Naive thymus-derived CD4-positive, alpha-beta T cell (primary cell): ENCODE measurements at regions of chr6 and their contacts with region 1.

Region 1: DNA sequence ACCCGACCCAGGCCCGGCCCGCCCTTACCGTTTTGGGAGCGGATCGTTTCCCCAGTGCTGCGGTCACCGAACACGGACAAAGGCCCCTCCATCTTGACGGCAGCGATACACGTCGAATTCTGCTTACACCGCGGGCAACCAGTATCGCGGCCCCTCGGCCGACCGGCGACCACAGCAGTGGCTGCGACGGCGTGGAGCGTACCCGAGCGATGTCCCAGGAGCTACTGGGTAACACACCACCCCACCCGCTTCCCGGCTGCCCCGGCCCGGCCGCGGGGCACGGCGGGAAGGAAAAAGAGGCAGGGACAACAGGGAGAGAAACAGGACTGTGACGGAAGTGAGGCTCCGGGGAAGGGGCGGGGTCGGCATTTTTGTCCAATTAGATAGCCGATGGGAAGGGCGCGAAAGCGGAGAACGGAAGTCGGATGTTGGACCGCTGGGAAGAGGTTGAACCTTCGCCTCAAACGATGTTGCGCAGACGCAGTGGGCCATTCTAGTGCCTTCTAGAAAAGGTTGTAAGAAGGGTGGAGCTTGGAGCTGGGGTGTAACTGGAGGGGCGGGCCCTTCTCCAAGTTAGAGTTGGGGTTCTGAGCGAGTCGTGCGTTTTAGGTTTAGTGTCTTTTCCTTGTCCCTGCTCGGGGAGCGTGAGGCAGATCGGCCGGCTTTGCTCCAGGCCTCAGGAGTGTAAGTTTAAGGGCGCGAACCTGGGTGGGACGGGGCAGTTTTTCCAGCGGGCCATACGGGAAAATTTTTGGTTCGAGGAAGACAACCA is at the start of gene TCP1:
- DNase-seq: peak; percentile 87 to 99 (median 98)
- ATAC-seq: peak; percentile 89
- H3K4me3 ChIP-seq: peak within 1 kb of the TSS; percentile 98
- H3K4me3 Mint-ChIP-seq: peak within 1 kb of the TSS; percentile 94 to 100 (median 99)
- H3K27ac ChIP-seq: peak within 1 kb of the TSS; percentile 94
- H3K27ac Mint-ChIP-seq: peak within 1 kb of the TSS; percentile 95 to 99 (median 98)
- H3K4me1 ChIP-seq: peaks cover 15 to 27% of the 10 kb centered on the region in 2 donors
- H3K4me1 Mint-ChIP-seq: peaks cover 41 to 83% (median 69%) of the 10 kb centered on the region in 7 donors
- H3K27me3 ChIP-seq: no peaks in the 10 kb centered on the region
- H3K27me3 Mint-ChIP-seq: peaks cover 0 to 3% (median 0%) of the 10 kb centered on the region in 5 donors
- total RNA-seq, gene TCP1: 147 to 225 (median 154) TPM

Region 2: GRCh38 chr6:159633196-159633595 is 156.4 kb before region 1 on chr6:
- CTCF ChIA-PET with region 1: no interaction called
- POLR2A ChIA-PET with region 1: no interaction called
- intact Hi-C with region 1: no loop called
- DNase-seq: no peak
- ATAC-seq: no peak
- H3K4me3 ChIP-seq: no peak overlapping the region
- H3K4me3 Mint-ChIP-seq: no peak overlapping the region
- H3K27ac ChIP-seq: no peak overlapping the region
- H3K27ac Mint-ChIP-seq: no peak overlapping the region
- H3K4me1 ChIP-seq: no peaks in the 10 kb centered on the region
- H3K4me1 Mint-ChIP-seq: no peaks in the 10 kb centered on the region
- H3K27me3 ChIP-seq: no peaks in the 10 kb centered on the region
- H3K27me3 Mint-ChIP-seq: no peaks in the 10 kb centered on the region

Region 3: DNA sequence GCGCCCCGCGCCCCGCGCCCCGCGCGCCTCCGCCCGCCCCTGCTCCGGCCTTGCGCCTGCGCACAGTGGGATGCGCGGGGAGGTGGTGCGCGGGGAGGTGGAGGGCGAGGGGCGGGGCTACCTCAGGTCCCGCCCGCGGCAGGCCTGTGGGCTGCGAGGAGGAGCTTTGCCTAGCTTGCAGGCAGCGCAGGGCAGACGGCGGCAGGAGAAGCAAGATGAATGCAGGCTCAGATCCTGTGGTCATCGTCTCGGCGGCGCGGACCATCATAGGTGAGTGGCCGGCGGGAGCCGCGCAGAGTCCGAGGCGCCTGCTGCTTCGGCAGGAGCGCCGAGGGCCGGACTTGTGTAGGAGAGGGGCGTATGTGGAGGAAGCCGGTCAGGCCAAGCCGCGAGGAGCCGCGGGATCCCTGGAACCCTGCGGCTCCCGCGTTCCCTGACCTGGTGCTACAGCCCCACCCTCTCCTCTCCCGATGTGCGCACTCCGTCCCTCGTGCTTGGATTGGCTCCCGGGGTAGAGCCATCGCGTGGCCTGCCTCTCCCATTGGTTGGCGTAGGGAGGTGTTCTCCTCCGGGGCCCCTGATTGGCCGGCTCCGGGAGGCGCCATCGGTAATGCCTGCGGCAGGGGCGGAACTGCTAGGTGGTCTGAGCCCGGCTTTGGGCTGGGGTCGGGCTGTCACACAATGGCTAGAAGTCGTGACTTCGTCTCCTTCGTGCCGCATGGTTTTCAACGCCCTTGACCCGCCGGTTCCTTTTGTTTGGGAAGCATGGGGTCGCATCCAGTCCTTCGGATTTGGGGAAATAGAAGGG is 27.5 kb before region 1 on chr6 and contains the start of gene ACAT2:
- CTCF ChIA-PET with region 1: interaction called, 6 read pairs
- POLR2A ChIA-PET with region 1: interaction called, 101 read pairs
- intact Hi-C with region 1: loop called (anchors 1 kb)
- DNase-seq: peak; percentile 89 to 95 (median 93)
- ATAC-seq: peak; percentile 94
- H3K4me3 ChIP-seq: peak within 1 kb of the TSS; percentile 99
- H3K4me3 Mint-ChIP-seq: peak within 1 kb of the TSS; percentile 84 to 97 (median 94)
- H3K27ac ChIP-seq: peak within 1 kb of the TSS; percentile 98
- H3K27ac Mint-ChIP-seq: peak within 1 kb of the TSS; percentile 93 to 99 (median 97)
- H3K4me1 ChIP-seq: peaks cover 6 to 15% of the 10 kb centered on the region in 2 donors
- H3K4me1 Mint-ChIP-seq: peaks cover 23 to 49% (median 34%) of the 10 kb centered on the region in 7 donors
- H3K27me3 ChIP-seq: no peaks in the 10 kb centered on the region
- H3K27me3 Mint-ChIP-seq: no peaks in the 10 kb centered on the region
- total RNA-seq, gene ACAT2: 18.5 to 53.9 (median 28.0) TPM

Region 4: DNA sequence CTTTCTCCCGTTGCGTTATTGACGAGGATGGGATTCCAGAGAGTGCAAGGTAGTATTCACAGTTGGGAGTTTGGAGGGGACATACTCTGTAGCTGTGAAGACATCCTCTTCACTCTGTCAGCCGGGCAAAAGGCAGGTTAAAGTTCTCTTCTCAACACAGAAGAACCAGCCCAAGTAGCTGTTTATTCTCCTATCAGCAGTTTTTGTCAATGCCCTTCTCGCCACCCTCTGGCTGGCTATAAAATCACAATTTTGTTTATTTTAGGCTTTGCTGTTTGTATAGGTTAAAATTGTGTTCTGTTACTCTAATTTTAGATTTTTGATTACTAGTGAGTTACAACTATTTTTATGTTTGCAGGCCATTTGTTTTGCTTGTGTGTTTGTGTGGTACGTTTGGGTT is 63.3 kb after region 1 on chr6:
- CTCF ChIA-PET with region 1: no interaction called
- POLR2A ChIA-PET with region 1: interaction called, 4 read pairs
- intact Hi-C with region 1: loop called (anchors 1 kb)
- DNase-seq: peak in 6 of 9 donors; percentile 12 to 59 (median 41)
- ATAC-seq: peak; percentile 37
- H3K4me3 ChIP-seq: no peak overlapping the region
- H3K4me3 Mint-ChIP-seq: no peak overlapping the region
- H3K27ac ChIP-seq: no peak overlapping the region
- H3K27ac Mint-ChIP-seq: peak overlapping the region in 1 of 9 donors; percentile 38
- H3K4me1 ChIP-seq: no peaks in the 10 kb centered on the region
- H3K4me1 Mint-ChIP-seq: peaks cover 0 to 6% (median 0%) of the 10 kb centered on the region in 7 donors
- H3K27me3 ChIP-seq: no peaks in the 10 kb centered on the region
- H3K27me3 Mint-ChIP-seq: peaks cover 0 to 37% (median 0%) of the 10 kb centered on the region in 5 donors

Region 5: DNA sequence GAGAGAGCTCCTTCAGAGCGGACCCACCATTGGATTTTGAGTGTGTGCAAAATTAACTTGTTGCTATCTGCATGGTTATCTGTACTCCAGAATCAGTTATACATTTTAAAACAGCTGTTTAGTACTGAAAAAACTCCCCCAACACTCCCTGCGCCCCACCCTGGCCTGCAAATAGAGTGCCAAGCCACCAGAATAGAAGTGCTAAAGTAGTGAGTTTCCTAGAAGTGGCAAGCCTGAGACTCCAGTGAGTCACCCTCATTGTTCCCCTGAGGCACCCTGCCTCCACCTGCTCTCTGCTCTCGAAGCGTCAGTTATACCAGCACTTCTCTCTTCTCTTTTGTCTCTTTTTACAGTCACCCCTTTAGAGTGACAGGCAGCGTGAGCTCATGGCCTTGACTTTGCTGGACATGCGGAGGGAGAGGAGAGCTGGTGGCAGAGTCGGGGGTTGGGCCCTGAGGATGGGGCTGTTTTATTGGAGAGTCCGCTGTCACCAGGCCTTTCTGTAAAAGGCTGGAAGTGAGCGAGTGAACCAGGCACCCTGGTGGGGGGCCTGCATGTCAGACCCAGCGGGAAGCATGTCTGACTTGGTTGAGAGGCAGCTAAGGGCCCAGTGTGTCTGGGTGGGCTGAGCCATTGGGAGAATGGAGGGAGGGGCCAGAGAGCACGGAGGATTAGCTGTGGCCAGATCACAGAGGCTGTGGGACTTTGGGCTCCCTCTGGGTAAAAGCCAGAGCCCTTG is 189.7 kb after region 1 on chr6:
- CTCF ChIA-PET with region 1: no interaction called
- POLR2A ChIA-PET with region 1: interaction called, 7 read pairs
- intact Hi-C with region 1: loop called in 1 of 2 experiments (anchors 5 kb)
- DNase-seq: peak in 1 of 9 donors; percentile 51
- ATAC-seq: peak; percentile 64
- H3K4me3 ChIP-seq: no peak overlapping the region
- H3K4me3 Mint-ChIP-seq: peak overlapping the region; percentile 8 to 82 (median 39)
- H3K27ac ChIP-seq: no peak overlapping the region
- H3K27ac Mint-ChIP-seq: peak overlapping the region; percentile 60 to 96 (median 86)
- H3K4me1 ChIP-seq: peaks cover 54 to 79% of the 10 kb centered on the region in 2 donors
- H3K4me1 Mint-ChIP-seq: peaks cover 78 to 99% (median 96%) of the 10 kb centered on the region in 7 donors
- H3K27me3 ChIP-seq: no peaks in the 10 kb centered on the region
- H3K27me3 Mint-ChIP-seq: no peaks in the 10 kb centered on the region

Region 6: GRCh38 chr6:160462551-160463109 is 673.1 kb after region 1 on chr6:
- CTCF ChIA-PET with region 1: no interaction called
- POLR2A ChIA-PET with region 1: no interaction called
- intact Hi-C with region 1: loop called (anchors 1 to 5 kb)
- DNase-seq: peak in 8 of 9 donors; percentile 69 to 93 (median 90)
- ATAC-seq: peak; percentile 95
- H3K4me3 ChIP-seq: peak overlapping the region; percentile 47
- H3K4me3 Mint-ChIP-seq: peak overlapping the region; percentile 60 to 89 (median 72)
- H3K27ac ChIP-seq: no peak overlapping the region
- H3K27ac Mint-ChIP-seq: peak overlapping the region; percentile 53 to 98 (median 88)
- H3K4me1 ChIP-seq: peaks cover 50 to 56% of the 10 kb centered on the region in 2 donors
- H3K4me1 Mint-ChIP-seq: peaks cover 33 to 81% (median 71%) of the 10 kb centered on the region in 7 donors
- H3K27me3 ChIP-seq: no peaks in the 10 kb centered on the region
- H3K27me3 Mint-ChIP-seq: peaks cover 0 to 52% (median 10%) of the 10 kb centered on the region in 5 donors